A549 (cell line): ENCODE measurements at regions of chr6 and their contacts with region 1.

Region 1: DNA sequence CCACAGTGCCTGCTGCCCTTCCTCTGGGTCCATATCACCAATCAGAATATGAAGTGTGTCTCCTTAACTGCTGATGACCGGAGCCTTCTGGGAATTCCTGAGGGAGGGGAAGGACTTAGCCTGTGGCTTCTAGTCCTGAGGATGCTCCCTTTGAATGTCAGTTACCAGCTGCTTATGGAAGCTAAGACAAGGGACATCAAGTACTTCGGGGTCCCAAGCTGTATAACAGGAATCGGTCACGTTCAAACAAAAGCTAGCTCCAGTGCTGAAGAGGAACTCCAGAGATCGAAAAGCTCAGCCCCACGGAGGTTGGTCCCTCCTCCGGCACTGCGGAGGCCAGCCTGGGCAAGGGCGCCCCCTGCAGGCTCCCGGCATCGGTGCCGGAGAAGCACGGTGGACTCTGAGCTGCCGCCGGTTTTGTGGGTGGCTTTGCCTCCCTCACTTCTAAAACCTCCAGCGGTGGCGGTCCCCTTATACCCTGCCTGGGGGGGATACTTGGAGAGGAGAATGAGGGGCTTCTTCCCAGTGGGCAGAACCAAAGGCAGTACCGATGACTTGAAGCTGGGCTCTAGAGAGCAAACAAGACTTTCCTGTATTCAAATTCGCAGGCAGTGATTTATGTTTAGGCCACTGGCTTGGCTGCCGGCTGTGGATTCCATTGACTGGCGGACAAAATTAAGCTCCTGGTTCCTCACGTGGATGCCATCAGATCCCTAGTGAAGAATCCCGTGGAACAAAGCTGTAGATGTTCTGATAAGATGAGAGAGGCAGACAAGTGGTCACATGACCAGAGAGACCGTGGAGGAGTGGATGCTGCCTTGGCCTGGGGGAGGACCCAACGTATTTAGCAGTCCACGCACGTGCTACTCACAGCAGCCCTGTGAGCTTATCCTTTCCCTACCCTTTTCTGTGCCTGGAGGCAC is 16.2 kb upstream of the UBR2 start:
- DNase-seq: peak; percentile 72 to 77
- ATAC-seq: peak; percentile 99
- H3K4me3 ChIP-seq: peak overlapping the region; percentile 52
- H3K27ac ChIP-seq: peak overlapping the region; percentile 81 to 84
- H3K4me1 ChIP-seq: peaks cover 16% of the 10 kb centered on the region; the same call in 2 of the 3 replicates
- CTCF ChIP-seq: peak; percentile 90
- EP300 ChIP-seq: no peak
- POLR2A ChIP-seq: no peak
- RAD21 ChIP-seq: peak; percentile 88 to 93

Region 2: DNA sequence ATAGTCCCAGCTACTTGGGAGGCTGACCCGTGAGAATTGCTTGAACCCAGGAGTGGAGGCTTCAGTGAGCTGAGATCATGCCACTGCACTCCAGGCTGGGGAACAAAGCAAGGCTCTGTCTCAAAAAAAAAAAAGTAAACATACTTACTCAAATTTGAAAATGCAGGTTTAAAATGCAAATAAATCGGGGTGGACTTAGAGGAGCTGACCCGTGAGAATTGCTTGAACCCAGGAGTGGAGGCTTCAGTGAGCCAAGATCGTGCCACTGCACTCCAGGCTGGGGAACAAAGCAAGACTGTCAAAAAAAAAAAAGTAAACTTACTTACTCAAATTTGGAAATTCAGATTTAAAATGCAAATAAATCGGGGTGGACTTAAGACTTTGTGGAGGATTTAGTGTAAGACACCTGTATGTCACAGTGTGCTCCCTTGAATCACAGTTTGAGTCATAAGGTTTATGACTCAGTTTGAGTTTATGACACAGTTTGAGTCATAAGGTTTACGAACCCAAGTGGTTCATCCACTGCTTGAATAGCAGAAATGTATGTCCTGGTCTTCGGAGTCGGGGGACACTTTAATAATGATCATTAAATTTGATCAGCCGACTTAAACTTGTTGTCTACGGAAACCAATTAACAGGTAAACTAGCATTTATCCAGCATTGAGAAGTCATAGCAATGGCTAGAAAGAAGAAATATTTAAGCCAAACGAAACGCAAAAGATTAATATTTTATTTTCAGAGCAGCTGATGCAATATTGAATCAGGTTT is 323.3 kb before region 1 on chr6:
- CTCF ChIA-PET with region 1: interaction called, 17 read pairs
- POLR2A ChIA-PET with region 1: no interaction called
- DNase-seq: peak; percentile 56 to 88
- ATAC-seq: peak; percentile 70 to 88
- H3K4me3 ChIP-seq: peak overlapping the region; percentile 30; the same call in 2 of the 3 replicates
- H3K27ac ChIP-seq: peak overlapping the region; percentile 78 to 85
- H3K4me1 ChIP-seq: peaks cover 50% of the 10 kb centered on the region
- CTCF ChIP-seq: no peak
- EP300 ChIP-seq: peak in 1 of 2 experiments; percentile 46; a peak in 2 of 5 replicates
- POLR2A ChIP-seq: no peak
- RAD21 ChIP-seq: 0 out of 5 replicates have a peak, but pooled peaks of 1 of the 2 experiments have one; percentile 1

Region 3: GRCh38 chr6:42260972-42261371 is 286.7 kb before region 1 on chr6:
- CTCF ChIA-PET with region 1: interaction called, 33 read pairs
- POLR2A ChIA-PET with region 1: interaction called, 3 read pairs
- DNase-seq: peak in 1 of 2 experiments; percentile 52
- ATAC-seq: peak; percentile 80 to 90; a peak in 4 of 6 replicates
- H3K4me3 ChIP-seq: no peak overlapping the region
- H3K27ac ChIP-seq: peak overlapping the region; percentile 43 to 72; a peak in 5 of 6 replicates
- H3K4me1 ChIP-seq: peaks cover 11% of the 10 kb centered on the region
- CTCF ChIP-seq: peak; percentile 61
- EP300 ChIP-seq: no peak
- POLR2A ChIP-seq: no peak
- RAD21 ChIP-seq: peak; percentile 61 to 74

Region 4: DNA sequence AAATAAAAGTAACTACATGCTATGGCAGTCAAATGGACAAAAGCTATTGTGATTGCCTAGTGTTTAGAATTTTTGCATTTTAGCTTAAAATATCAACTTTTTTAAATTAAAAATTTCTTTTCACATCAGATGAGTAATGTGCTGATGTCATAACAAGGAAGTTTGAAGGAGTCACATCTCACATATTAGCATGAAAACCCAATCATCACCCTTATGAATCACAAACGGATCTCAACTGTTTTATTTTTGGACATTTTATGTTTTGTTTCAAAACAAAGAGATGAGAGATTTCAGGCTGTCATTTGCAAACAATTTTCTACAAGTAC is 42.3 kb before region 1 on chr6:
- CTCF ChIA-PET with region 1: interaction called, 16 read pairs
- POLR2A ChIA-PET with region 1: interaction called, 13 read pairs
- DNase-seq: peak; percentile 16 to 57
- ATAC-seq: peak; percentile 71 to 90
- H3K4me3 ChIP-seq: peak overlapping the region; percentile 44
- H3K27ac ChIP-seq: peak overlapping the region; percentile 69 to 85
- H3K4me1 ChIP-seq: peaks cover 13% of the 10 kb centered on the region; the same call in 2 of the 3 replicates
- CTCF ChIP-seq: no peak
- EP300 ChIP-seq: no peak
- POLR2A ChIP-seq: no peak
- RAD21 ChIP-seq: no peak

Region 5: DNA sequence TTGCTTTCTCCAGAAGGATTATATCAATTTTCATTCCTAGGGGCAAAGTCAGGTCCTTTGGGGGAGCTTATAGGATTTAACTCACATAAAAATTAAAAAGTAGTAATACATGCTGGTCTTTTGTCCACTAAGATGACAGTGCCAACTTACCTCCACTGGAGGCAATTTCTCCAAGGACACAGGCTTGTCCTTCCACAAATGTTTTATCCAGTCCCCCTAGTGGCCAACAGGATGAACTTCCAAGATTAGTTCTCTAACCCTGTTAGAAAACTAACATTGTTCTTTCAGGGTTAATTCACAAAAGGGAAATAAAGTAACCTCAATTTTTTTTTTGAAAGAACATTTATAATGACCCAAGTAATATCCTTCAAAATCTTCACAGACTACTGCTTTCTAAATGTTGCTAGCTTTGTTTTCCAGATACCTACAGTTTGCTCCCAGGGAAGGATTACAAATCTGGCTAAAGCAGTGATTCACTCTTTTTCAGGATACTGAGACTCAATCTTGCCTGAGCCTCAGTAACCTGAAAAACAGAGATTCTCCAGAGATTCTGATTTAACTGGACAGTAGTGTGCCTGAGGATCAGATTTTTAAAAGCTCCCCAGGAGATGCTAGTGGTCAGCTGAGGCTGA is 15.5 kb before region 1 on chr6:
- CTCF ChIA-PET with region 1: interaction called, 39 read pairs
- POLR2A ChIA-PET with region 1: no interaction called
- DNase-seq: peak; percentile 54 to 77
- ATAC-seq: peak; percentile 87 to 89
- H3K4me3 ChIP-seq: no peak overlapping the region
- H3K27ac ChIP-seq: no peak overlapping the region
- H3K4me1 ChIP-seq: no peaks in the 10 kb centered on the region
- CTCF ChIP-seq: peak; percentile 69
- EP300 ChIP-seq: no peak
- POLR2A ChIP-seq: no peak
- RAD21 ChIP-seq: peak; percentile 58 to 72

Region 6: DNA sequence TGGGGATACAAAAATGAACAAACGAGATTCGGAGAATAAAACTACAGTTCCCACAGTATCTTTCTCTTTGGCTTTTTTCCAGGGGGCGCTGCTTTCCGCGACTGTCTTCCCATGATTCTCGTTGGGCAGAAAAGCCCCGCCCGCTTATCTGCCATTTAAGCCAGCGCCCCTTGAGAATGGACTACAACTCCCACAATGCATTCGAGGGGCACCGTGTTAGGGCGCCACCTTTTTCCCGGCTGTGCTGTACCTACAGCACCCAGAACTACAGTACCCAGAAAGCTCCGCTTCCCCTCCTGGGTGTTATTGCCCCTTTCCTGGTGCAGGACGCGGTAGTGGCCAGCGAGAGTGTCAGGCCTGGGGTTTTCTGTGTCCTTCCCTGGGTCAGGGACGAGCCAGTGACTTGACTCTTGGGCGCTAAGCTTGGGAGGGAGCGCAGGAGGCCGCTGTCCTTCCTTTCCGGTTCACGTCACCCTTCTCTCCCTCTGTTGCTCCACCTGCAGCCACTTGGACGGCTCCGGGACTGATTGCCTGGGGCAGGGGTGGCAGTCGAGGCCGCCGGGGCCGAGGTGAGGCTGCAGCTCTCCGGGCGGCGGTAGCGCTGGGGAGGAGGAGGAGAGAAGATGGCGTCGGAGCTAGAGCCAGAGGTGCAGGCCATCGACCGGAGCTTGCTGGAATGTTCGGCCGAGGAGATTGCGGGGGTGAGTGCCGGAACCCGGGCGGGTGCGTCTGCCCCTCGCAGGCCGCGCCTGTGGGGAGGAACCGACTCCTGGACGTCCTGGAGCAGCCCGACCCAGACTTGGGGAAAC is 16.2 kb after region 1 on chr6 and contains the start of gene UBR2:
- CTCF ChIA-PET with region 1: interaction called, 44 read pairs
- POLR2A ChIA-PET with region 1: interaction called, 15 read pairs
- DNase-seq: peak; percentile 78 to 97
- ATAC-seq: peak; percentile 96 to 98
- H3K4me3 ChIP-seq: peak within 1 kb of the TSS; percentile 94
- H3K27ac ChIP-seq: peak within 1 kb of the TSS; percentile 85 to 92
- H3K4me1 ChIP-seq: peaks cover 6% of the 10 kb centered on the region; the same call in 2 of the 3 replicates
- CTCF ChIP-seq: no peak
- EP300 ChIP-seq: no peak
- POLR2A ChIP-seq: peak; percentile 71
- RAD21 ChIP-seq: no peak
- polyA plus RNA-seq, gene UBR2: 12.9 and 15.2 TPM in 2 replicates

Region 7: DNA sequence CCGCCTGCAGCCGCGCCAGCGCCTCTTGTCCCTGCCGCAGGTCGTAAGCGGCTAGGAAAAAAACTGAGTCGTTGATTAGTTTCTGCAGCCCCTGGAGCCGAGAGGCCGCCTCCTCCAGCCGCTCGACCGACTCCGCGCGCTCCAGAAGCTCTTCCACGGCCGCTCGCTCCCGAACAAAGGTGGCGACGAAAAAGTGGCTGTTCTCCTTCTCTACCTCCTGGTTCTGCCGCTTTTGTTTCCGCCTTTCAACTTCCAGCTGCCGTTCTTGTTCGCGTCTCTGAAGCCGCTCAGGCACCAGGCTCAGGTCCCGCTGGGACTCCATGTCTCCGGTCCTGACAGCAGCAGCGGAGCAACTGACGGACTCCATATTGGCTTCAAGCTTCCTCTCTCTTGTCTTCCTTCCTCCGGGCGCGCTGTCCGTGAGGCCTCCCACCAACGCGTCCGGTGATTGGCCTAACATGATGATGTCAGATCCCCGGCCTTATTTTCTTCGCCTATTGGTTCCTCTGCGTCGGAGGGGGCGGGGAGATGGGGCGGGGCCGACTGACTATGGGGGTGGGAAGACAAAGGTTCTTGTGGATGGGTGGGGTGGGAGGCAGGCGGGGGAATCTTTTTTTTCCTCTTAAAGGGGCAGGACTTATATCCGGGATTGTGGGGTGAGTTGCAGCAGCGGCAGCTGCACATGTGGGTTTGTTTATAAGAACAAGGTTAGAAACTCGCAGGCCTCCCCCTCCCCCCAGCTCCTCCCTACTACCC is 198.2 kb after region 1 on chr6 and contains the start of gene TBCC:
- CTCF ChIA-PET with region 1: no interaction called
- POLR2A ChIA-PET with region 1: no interaction called
- DNase-seq: peak; percentile 98
- ATAC-seq: peak; percentile 82 to 88
- H3K4me3 ChIP-seq: peak within 1 kb of the TSS; percentile 73
- H3K27ac ChIP-seq: peak within 1 kb of the TSS; percentile 94 to 98
- H3K4me1 ChIP-seq: peaks cover 18% of the 10 kb centered on the region
- CTCF ChIP-seq: no peak
- EP300 ChIP-seq: no peak
- POLR2A ChIP-seq: peak; percentile 93
- RAD21 ChIP-seq: no peak
- polyA plus RNA-seq, gene TBCC: 10.2 and 10.3 TPM in 2 replicates

Region 8: DNA sequence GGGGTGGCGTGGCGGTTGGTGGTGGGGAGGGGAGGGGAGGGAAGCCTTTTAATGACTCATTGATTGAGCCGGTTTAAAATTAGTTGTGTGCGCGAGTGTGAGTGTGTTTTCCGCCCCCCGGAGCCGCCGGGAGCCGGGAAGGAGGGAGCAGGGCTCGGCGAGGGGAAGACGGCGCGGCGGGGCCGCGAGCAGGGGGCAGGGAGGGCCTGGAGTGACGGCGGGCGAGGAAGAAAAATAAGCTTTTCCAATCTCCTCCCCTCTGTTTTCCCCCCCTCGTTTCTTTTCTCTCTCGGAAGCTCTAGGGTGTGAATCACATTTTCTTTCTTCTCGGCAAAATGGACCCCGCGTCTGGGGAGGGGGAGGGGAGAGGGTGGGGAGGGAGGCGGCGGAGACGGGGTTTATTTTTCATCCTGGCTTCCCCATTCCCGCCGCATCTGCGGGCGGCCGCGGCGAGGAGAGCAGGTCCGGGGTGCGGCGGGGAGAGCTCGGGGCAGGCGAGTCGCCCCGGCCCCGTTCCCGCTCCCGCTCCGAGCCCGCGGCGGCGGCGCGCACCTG is 235.0 kb after region 1 on chr6:
- CTCF ChIA-PET with region 1: no interaction called
- POLR2A ChIA-PET with region 1: no interaction called
- DNase-seq: peak; percentile 69 to 82
- ATAC-seq: peak; percentile 74 to 78
- H3K4me3 ChIP-seq: peak overlapping the region; percentile 70
- H3K27ac ChIP-seq: peak overlapping the region; percentile 100
- H3K4me1 ChIP-seq: peaks cover 8% of the 10 kb centered on the region; the same call in 2 of the 3 replicates
- CTCF ChIP-seq: no peak
- EP300 ChIP-seq: no peak; a peak in 1 of 5 replicates
- POLR2A ChIP-seq: peak; percentile 22
- RAD21 ChIP-seq: no peak; a peak in 1 of 5 replicates